Activated CD4-positive, alpha-beta T cell treated with anti-CD3 and anti-CD28 coated beads, Interleukin-2, amount 10 ng/mL, durations not matched to agents 24 days and 14 days (primary cell): ENCODE measurements at regions of chr5 and their contacts with region 1.

Region 1: DNA sequence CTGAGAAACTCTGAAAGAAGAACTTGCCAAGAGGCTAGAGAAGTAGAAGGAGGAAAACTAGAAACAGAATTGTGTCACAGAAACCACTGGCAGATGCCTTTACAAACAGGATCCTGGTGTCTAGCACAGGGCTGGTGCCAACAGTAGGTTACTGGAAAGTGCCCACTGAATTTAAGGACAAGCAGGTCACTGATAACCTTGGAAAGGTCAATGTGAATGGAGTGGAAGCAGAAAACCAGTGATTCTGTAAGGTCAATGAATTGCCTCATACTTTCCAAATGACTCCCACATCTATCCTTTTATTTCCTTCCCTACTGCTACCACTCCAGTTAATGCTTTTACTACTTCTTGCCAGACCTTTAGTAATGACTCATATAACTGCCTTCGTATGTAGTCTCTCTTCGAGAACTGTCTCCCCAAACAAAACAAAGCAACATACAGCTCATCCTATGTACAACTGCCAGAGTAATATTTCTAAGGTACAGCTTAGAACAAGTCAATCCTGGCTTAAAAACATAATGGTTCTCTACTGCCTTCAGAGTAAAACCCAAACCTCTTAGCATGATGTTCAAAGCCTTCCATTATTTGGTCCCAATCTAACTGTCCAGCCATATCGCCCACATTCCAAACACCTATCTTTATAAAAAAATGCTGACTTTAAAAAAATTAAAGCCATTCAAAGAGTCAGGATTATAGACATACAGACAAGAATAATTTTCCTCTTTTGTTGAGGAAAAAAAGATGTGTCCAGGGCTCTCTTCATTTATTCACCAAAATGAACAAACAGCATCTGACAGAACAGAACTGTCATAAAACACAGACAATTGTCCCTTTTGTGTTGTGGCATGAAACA is 52.5 kb downstream of the NR3C1 start:
- DNase-seq: no peak
- H3K4me3 Mint-ChIP-seq: no peak overlapping the region
- H3K27ac Mint-ChIP-seq: no peak overlapping the region
- H3K4me1 Mint-ChIP-seq: peaks cover 42% of the 10 kb centered on the region
- H3K27me3 Mint-ChIP-seq: no peaks in the 10 kb centered on the region

Region 2: DNA sequence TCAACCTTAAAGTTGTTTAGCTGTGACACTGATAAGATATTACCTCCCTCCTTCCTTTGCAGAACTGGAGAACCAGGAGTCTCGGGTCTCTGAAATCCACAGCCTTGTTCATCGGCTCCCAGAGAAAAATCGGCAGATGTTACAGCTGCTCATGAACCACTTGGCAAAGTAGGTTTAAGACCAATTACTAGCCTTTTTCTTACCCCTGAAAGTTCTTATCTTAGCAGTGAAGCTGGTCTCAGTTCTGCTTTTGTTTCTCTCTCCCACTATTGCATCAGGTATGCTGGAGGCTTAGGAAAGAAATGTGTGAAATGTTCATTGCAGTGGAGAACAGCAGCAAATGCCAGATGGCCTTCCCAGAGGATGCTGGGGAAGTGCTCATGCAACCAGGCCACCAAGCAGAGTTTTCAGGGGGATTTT is 293.4 kb before region 1 on chr5:
- intact Hi-C with region 1: loop called (anchors 5 kb)
- DNase-seq: no peak
- H3K4me3 Mint-ChIP-seq: no peak overlapping the region
- H3K27ac Mint-ChIP-seq: peak overlapping the region; percentile 95
- H3K4me1 Mint-ChIP-seq: peaks cover 62% of the 10 kb centered on the region
- H3K27me3 Mint-ChIP-seq: no peaks in the 10 kb centered on the region

Region 3: DNA sequence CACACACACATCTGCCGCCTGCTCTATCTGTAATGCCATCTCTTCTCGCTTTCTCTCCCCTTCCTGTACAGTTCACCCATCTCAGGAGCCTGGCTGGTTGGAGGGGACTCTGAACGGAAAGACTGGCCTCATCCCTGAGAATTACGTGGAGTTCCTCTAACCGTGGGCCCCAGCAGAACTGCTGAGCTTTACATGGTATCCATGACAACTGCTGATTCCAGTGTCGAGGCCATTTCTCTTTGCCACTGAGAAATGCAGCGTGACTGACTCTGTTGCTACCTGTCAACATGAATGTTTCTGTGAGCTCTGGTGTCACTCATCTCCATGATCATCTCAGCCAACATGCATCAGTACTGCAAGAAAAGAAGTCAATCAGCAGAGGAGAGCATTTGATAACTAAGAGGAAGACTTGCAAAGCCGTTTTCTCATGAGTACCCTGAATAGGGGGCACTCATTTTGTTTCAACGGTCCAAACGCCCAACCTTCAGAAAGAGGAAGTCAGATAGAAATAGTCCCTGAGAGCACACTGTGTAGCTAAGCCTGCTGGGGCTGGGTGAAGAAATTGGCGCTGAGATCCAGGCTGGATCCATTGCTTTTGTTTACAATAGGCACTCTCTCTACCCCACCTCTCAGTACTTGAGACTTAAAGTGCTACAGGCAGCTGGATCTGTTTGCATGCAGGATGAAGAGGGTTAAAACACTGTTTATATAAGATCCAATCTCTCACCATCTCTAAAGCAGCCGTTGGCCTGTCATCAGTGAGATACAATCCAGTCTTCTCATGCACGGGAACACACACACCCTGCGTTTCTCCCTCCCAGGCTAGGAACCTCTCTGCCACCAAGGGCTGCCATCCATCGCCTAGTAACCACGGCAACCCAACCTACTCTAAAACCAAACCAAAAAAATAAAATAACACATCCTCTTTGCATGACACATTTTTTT is 128.4 kb before region 1 on chr5:
- intact Hi-C with region 1: loop called (anchors 5 kb)
- DNase-seq: peak; percentile 87
- H3K4me3 Mint-ChIP-seq: peak overlapping the region; percentile 71
- H3K27ac Mint-ChIP-seq: peak overlapping the region; percentile 95
- H3K4me1 Mint-ChIP-seq: peaks cover 56% of the 10 kb centered on the region
- H3K27me3 Mint-ChIP-seq: no peaks in the 10 kb centered on the region

Region 4: GRCh38 chr5:143245929-143246561 is 104.9 kb before region 1 on chr5:
- intact Hi-C with region 1: no loop called
- DNase-seq: no peak
- H3K4me3 Mint-ChIP-seq: no peak overlapping the region
- H3K27ac Mint-ChIP-seq: no peak overlapping the region
- H3K4me1 Mint-ChIP-seq: no peaks in the 10 kb centered on the region
- H3K27me3 Mint-ChIP-seq: no peaks in the 10 kb centered on the region

Region 5: DNA sequence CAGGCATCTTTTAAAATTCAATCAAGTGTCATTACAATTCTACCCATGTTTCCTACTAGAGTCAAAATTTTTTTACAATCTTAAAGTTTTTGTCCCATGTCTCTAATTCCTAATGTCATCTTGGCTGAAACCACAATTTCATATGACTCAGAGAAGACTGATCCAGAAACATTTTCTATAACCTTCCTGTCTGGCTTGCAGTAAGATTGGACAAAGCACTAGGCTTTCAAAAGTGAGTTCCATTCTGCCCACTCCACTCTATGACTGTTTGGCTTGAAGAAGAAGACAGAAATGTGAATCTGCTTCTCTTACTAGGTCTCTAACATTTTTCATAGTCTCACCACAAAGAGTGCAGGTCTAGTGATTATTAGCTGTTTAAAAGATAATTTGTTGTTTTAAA is 36.3 kb before region 1 on chr5:
- intact Hi-C with region 1: loop called (anchors 5 kb)
- DNase-seq: no peak
- H3K4me3 Mint-ChIP-seq: no peak overlapping the region
- H3K27ac Mint-ChIP-seq: peak overlapping the region; percentile 9
- H3K4me1 Mint-ChIP-seq: peaks cover 33% of the 10 kb centered on the region
- H3K27me3 Mint-ChIP-seq: no peaks in the 10 kb centered on the region

Region 6: DNA sequence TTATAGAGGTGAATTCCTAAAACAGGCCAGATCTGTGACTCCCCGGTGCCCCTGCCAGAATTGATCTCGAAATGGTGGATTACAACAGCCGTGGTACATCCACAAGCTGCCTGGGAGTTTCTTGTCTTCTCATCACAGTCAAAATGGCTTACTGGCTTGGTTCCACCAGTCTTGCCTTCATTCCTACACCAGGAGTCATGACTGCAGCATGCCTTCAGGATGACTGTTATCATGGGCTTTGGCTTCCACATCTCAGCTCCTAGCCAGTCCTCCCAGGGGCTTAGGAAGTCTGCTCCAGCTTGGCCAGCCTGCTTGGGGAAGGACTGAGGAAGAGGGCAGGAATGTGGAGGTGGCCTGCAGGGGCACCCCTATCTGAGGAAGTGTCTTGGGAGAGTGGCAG is 185.4 kb after region 1 on chr5:
- intact Hi-C with region 1: no loop called
- DNase-seq: no peak
- H3K4me3 Mint-ChIP-seq: no peak overlapping the region
- H3K27ac Mint-ChIP-seq: no peak overlapping the region
- H3K4me1 Mint-ChIP-seq: no peaks in the 10 kb centered on the region
- H3K27me3 Mint-ChIP-seq: no peaks in the 10 kb centered on the region